ENCODE measurements at regions of chr5 and their contacts with region 1.

Region 1: DNA sequence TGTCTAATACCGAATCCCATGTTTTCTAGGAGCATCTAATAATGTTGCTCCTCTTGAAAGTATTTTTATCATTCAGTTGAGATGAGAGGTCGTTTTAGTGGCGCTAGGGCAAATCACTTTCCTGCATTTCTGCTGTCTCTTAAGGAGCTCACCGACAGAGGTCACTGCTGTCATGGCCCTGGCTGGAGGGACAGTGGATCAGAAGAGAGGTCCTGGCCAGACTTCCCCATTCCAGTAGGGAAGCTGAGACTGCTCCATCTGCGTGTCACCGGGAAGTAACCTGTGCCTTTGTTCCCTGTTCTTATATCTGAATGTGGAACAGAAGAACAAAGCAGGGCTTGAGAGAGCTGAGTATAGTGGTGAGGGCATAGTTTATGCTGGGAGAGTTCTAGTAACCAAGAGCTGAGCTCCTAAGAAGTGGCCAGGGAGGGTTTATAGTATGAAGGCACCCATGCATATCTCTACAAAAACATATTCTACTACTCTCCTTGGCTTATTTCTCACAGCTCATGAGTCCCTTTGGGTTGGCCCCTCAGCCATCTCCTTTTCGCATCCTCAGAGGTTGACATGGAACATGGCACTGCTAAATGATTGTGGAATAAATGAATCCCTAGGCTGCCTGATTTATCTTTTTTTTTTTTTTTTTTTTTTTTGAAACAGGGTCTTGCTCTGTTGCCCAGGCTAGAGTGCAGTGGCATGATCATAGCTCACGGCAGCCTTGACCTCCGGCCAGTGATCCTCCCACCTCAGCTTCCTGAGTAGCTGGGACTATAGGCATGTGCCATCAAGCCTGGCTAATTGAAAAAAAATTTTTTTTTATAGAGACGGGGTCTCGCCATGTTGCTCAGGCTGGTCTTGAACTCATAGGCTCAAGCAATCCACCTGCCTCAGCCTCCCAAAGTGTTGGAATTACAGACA is 27.2 kb downstream of the ATP6V0E1 start:
- DNase-seq: no peak
- ATAC-seq: no peak
- H3K4me3 Mint-ChIP-seq: no peak overlapping the region
- H3K27ac Mint-ChIP-seq: peak overlapping the region; percentile 65
- H3K4me1 Mint-ChIP-seq: peaks cover 56% of the 10 kb centered on the region
- H3K27me3 Mint-ChIP-seq: no peaks in the 10 kb centered on the region
- CTCF ChIP-seq: no peak

Region 2: DNA sequence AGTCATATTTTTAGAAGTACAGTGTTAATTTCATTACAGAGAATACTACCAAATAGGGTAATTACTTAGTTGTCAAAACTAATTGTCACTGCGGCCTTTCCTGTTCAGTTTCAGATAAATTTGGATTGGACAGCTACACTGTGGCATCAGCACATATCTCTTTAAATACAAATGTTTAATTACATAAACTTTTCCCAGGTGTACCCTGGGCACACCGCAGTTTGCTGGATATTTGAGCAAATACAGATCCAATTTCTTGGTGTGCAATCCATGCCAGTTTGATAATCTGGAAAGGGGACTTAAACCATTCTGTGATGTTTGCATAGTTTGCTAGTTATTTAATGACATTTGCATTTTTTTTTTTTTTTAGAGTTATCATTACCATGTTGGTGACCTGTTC is 16.4 kb before region 1 on chr5:
- CTCF ChIA-PET with region 1: no interaction called
- POLR2A ChIA-PET with region 1: interaction called, 3 read pairs
- intact Hi-C with region 1: loop called (anchors 2 kb)
- DNase-seq: no peak
- ATAC-seq: no peak
- H3K4me3 Mint-ChIP-seq: no peak overlapping the region
- H3K27ac Mint-ChIP-seq: no peak overlapping the region
- H3K4me1 Mint-ChIP-seq: peaks cover 21% of the 10 kb centered on the region
- H3K27me3 Mint-ChIP-seq: no peaks in the 10 kb centered on the region
- CTCF ChIP-seq: no peak

Region 3: GRCh38 chr5:173029499-173029921 is 18.7 kb after region 1 on chr5:
- CTCF ChIA-PET with region 1: no interaction called
- POLR2A ChIA-PET with region 1: no interaction called
- intact Hi-C with region 1: no loop called
- DNase-seq: no peak
- ATAC-seq: peak; percentile 54
- H3K4me3 Mint-ChIP-seq: no peak overlapping the region
- H3K27ac Mint-ChIP-seq: no peak overlapping the region
- H3K4me1 Mint-ChIP-seq: peaks cover 17% of the 10 kb centered on the region
- H3K27me3 Mint-ChIP-seq: no peaks in the 10 kb centered on the region
- CTCF ChIP-seq: no peak

Measured in activated B cell treated with CpG ODN at 0.5 μM for 24 hours (primary cell).